ENCODE measurements at regions of chr16 and their contacts with region 1.

Region 1: GRCh38 chr16:56833243-56833970 is 31.6 kb upstream of the SLC12A3 start:
- DNase-seq: no peak
- ATAC-seq: no peak
- H3K4me3 ChIP-seq: no peak overlapping the region
- H3K4me3 Mint-ChIP-seq: no peak overlapping the region
- H3K27ac ChIP-seq: no peak overlapping the region
- H3K27ac Mint-ChIP-seq: no peak overlapping the region
- H3K4me1 ChIP-seq: no peaks in the 10 kb centered on the region
- H3K4me1 Mint-ChIP-seq: no peaks in the 10 kb centered on the region
- H3K27me3 ChIP-seq: no peaks in the 10 kb centered on the region
- H3K27me3 Mint-ChIP-seq: no peaks in the 10 kb centered on the region
- CTCF ChIP-seq: no peak

Region 2: DNA sequence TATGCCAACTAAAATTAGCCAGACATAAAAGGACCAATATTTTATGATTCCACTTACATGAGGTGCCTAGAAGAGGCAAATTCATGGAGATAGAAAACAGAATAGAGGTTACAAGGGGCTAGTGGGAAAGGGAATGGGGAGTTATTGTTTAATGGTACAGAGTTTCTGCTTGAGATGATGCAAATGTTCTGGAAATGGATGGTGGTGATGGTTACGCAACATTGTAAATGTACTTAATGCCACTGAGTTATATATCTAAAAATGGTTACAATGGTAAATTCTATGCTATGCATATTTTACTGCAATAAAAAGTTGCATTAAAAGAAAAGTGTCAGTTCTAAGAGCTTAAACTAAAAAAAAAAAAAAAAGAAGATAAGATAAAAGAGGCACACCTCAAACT is 133.2 kb before region 1 on chr16:
- CTCF ChIA-PET with region 1: no interaction called
- POLR2A ChIA-PET with region 1: no interaction called
- intact Hi-C with region 1: no loop called
- DNase-seq: no peak
- ATAC-seq: no peak
- H3K4me3 ChIP-seq: no peak overlapping the region
- H3K4me3 Mint-ChIP-seq: no peak overlapping the region
- H3K27ac ChIP-seq: no peak overlapping the region
- H3K27ac Mint-ChIP-seq: no peak overlapping the region
- H3K4me1 ChIP-seq: peaks cover 3% of the 10 kb centered on the region
- H3K4me1 Mint-ChIP-seq: peaks cover 9% of the 10 kb centered on the region
- H3K27me3 ChIP-seq: no peaks in the 10 kb centered on the region
- H3K27me3 Mint-ChIP-seq: no peaks in the 10 kb centered on the region
- CTCF ChIP-seq: no peak

Region 3: GRCh38 chr16:56729735-56730662 is 103.4 kb before region 1 on chr16 and contains the start of gene NUP93:
- CTCF ChIA-PET with region 1: no interaction called
- POLR2A ChIA-PET with region 1: no interaction called
- intact Hi-C with region 1: no loop called
- DNase-seq: peak; percentile 81 to 96 (median 87)
- ATAC-seq: peak; percentile 93
- H3K4me3 ChIP-seq: peak within 1 kb of the TSS; percentile 99
- H3K4me3 Mint-ChIP-seq: no peak within 1 kb of the TSS
- H3K27ac ChIP-seq: peak within 1 kb of the TSS; percentile 44 to 57
- H3K27ac Mint-ChIP-seq: peak within 1 kb of the TSS; percentile 93
- H3K4me1 ChIP-seq: peaks cover 26% of the 10 kb centered on the region
- H3K4me1 Mint-ChIP-seq: peaks cover 34% of the 10 kb centered on the region
- H3K27me3 ChIP-seq: no peaks in the 10 kb centered on the region
- H3K27me3 Mint-ChIP-seq: no peaks in the 10 kb centered on the region
- CTCF ChIP-seq: no peak
- total RNA-seq, gene NUP93: 45.6 to 47.2 TPM

Region 4: DNA sequence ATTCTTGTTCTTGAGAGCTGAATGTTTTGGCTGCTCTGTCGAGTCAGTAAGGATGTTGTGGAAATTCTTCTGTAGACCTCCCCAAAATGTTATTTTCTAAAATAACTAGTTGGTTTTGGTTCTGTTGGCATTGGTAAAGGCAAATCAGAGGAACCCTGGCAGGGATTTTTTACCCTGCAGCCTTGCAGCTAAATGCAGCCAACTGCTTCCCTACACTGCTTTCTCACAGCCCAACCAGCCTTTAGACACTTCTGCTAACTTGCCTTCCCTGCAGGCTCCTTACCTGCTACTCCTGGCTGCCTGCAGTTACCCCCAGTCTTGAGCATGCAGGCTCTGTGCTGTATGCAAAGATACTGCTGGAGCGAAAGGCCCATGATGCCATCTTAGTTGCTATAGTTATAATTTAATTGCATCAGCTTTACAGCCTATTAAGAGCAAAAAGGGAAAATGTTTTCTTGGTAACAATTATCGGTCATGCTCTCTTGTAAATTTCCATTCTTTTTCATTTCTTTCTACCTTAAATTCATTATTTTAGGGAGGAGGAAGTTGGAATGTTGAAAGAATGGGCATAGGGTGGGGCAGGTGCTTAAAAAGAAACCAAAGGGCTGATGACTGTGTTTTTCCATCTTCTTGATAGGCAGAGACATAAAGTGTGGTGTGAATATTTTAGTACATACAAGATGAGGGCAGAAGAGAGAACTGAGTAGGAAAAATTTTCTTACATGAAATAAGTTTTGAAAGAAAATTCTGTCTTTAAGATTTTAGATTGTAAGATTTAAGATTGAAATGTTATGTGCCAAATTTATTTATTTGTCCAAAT is 83.5 kb before region 1 on chr16:
- CTCF ChIA-PET with region 1: no interaction called
- POLR2A ChIA-PET with region 1: no interaction called
- intact Hi-C with region 1: loop called in 1 of 2 experiments (anchors 5 kb)
- DNase-seq: no peak
- ATAC-seq: no peak
- H3K4me3 ChIP-seq: no peak overlapping the region
- H3K4me3 Mint-ChIP-seq: no peak overlapping the region
- H3K27ac ChIP-seq: no peak overlapping the region
- H3K27ac Mint-ChIP-seq: no peak overlapping the region
- H3K4me1 ChIP-seq: no peaks in the 10 kb centered on the region
- H3K4me1 Mint-ChIP-seq: peaks cover 19% of the 10 kb centered on the region
- H3K27me3 ChIP-seq: no peaks in the 10 kb centered on the region
- H3K27me3 Mint-ChIP-seq: no peaks in the 10 kb centered on the region
- CTCF ChIP-seq: no peak

Region 5: DNA sequence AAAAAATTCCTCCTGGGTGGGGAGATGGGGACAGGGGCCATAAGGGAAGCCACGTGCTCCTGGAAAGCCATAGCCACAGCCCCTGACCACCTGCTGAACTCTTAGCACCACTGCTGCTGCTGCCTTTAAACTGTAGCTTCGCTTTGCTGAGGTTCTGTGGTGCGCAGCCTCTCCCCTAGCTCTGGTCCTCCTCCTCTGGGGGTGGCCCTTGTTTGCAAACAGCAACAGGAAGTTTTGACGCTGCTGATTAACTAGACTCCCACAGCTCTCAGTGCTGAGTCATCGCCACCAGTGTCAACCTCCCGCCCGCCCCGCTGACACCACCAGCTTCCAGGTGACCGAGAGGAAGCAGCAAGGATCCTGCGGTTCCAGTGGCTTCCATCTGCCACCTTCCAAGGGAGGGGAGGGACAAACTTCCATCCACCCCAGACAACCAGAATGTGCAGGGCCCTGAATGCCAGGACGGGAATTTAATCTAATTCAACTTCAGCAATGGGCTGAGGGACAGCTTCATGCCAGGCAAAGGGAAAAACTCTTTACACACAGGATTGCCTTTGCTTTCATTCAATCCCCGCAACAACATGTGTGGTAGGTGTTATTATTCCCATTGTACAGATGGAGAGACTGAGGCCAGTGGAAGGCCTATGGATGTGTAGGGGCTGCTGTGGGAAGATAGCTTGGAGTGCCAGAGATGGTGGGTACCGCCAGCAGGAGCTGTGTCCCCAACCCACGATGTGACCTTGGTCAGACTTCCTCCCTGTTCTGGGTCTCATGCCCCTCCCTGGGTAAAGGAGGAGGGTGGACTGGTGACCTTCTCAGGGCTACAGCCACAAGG is 977.0 kb after region 1 on chr16:
- CTCF ChIA-PET with region 1: no interaction called
- POLR2A ChIA-PET with region 1: no interaction called
- intact Hi-C with region 1: no loop called
- DNase-seq: peak; percentile 40 to 92 (median 65)
- ATAC-seq: peak; percentile 96
- H3K4me3 ChIP-seq: no peak overlapping the region
- H3K4me3 Mint-ChIP-seq: peak overlapping the region; percentile 44
- H3K27ac ChIP-seq: no peak overlapping the region
- H3K27ac Mint-ChIP-seq: peak overlapping the region; percentile 78
- H3K4me1 ChIP-seq: peaks cover 37% of the 10 kb centered on the region
- H3K4me1 Mint-ChIP-seq: peaks cover 18% of the 10 kb centered on the region
- H3K27me3 ChIP-seq: peaks cover 3 to 4% of the 10 kb centered on the region in 2 experiments
- H3K27me3 Mint-ChIP-seq: peaks cover 41% of the 10 kb centered on the region
- CTCF ChIP-seq: no peak

Measured in CD4-positive, alpha-beta T cell (primary cell).